Left cardiac atrium (tissue), 4 donors: ENCODE measurements at regions of chr2 and their contacts with region 1.

Region 1: GRCh38 chr2:44126106-44126797 is 42.4 kb upstream of the PPM1B start:
- DNase-seq: no peak
- ATAC-seq: no peak

Region 2: DNA sequence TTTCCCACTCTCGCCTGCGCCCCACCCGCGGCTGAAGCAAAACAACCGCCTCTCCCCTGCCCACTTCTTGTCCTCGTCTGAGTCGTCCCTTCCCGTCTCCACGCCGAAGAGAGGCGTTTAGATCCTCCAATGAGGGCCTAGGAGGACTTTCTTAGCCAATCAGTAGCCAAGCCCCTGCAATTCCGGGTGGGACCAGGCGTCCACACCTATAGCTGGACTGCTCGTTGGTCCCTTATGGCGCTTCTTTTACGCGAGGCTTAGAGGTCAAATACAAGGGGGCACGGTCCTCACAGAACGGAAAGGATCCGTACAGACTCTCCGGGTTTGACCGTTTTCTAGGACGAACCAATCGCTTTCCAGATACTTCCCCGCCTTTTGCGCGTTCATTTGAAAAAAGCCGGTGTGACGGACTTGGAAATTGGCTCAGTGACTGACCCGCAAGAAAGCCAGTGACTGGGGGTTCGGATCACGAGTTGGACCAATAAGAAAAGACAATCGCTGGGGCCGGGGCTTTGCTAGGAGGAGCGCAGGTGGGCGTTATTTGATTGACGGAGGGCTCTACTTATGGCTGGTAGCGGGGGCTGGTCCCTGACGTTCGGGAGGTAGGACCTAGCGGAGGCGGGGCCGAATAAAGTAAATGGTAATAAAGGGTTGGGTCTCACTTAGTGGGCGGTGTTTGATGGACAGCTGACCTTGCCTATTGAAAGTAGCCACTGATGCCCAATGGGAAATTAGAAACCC is 41.9 kb after region 1 on chr2:
- intact Hi-C with region 1: loop called in 1 of 2 experiments (anchors 2 kb)
- DNase-seq: peak; percentile 100
- ATAC-seq: peak; percentile 91 to 94